Mammary epithelial cell (primary cell): ENCODE measurements at regions of chr21 and their contacts with region 1.

Region 1: DNA sequence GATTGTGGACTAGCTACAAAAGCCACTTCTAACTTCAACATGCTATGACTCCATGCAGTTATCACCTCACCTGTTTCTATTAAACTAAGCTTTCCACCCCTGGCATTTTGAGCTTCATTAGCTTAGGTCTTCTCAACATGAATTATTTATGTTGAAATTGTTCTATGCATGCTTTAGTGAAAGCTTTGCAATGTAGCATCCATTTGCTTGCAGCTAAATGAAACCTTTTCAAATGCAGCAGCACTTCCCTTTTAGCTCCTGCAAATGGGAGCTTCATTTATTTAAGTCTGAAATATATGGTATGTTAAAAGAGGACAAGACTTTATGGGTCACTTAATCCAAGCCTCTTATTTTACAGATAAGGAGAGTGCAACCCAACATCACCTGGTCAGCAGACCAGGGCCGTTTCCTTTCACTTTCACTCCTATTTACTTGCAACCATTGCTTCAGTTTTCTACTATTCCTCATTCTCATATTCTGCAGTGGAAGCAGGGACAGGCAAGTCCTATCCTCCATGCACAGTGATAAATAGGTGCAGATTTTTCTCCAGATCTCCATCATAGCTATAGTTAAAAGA is 56.4 kb upstream of the SAMSN1 start:
- DNase-seq: no peak
- H3K4me3 ChIP-seq: no peak overlapping the region
- H3K27ac ChIP-seq: no peak overlapping the region
- H3K4me1 ChIP-seq: peaks cover 11% of the 10 kb centered on the region
- H3K27me3 ChIP-seq: no peaks in the 10 kb centered on the region
- CTCF ChIP-seq: no peak

Region 2: GRCh38 chr21:14560555-14560954 is 41.9 kb before region 1 on chr21:
- CTCF ChIA-PET with region 1: no interaction called
- dilution Hi-C with region 1: loop called (anchors 5 kb)
- in situ Hi-C with region 1: no loop called
- intact Hi-C with region 1: no loop called
- DNase-seq: no peak
- H3K4me3 ChIP-seq: no peak overlapping the region
- H3K27ac ChIP-seq: no peak overlapping the region
- H3K4me1 ChIP-seq: no peaks in the 10 kb centered on the region
- H3K27me3 ChIP-seq: no peaks in the 10 kb centered on the region
- CTCF ChIP-seq: no peak

Region 3: GRCh38 chr21:14712121-14712723 is 109.8 kb after region 1 on chr21:
- CTCF ChIA-PET with region 1: no interaction called
- dilution Hi-C with region 1: no loop called
- in situ Hi-C with region 1: loop called in 1 of 2 experiments (anchors 25 kb)
- intact Hi-C with region 1: no loop called
- DNase-seq: peak; percentile 52
- H3K4me3 ChIP-seq: no peak overlapping the region
- H3K27ac ChIP-seq: no peak overlapping the region
- H3K4me1 ChIP-seq: no peaks in the 10 kb centered on the region
- H3K27me3 ChIP-seq: no peaks in the 10 kb centered on the region
- CTCF ChIP-seq: no peak

Region 4: GRCh38 chr21:15015622-15016471 is 413.4 kb after region 1 on chr21:
- CTCF ChIA-PET with region 1: no interaction called
- dilution Hi-C with region 1: no loop called
- in situ Hi-C with region 1: no loop called
- intact Hi-C with region 1: no loop called
- DNase-seq: peak; percentile 84
- H3K4me3 ChIP-seq: no peak overlapping the region
- H3K27ac ChIP-seq: peak overlapping the region; percentile 80
- H3K4me1 ChIP-seq: peaks cover 10% of the 10 kb centered on the region
- H3K27me3 ChIP-seq: no peaks in the 10 kb centered on the region
- CTCF ChIP-seq: no peak